Sigmoid colon (tissue), 7 donors: ENCODE measurements at regions of chr17 and their contacts with region 1.

Region 1: DNA sequence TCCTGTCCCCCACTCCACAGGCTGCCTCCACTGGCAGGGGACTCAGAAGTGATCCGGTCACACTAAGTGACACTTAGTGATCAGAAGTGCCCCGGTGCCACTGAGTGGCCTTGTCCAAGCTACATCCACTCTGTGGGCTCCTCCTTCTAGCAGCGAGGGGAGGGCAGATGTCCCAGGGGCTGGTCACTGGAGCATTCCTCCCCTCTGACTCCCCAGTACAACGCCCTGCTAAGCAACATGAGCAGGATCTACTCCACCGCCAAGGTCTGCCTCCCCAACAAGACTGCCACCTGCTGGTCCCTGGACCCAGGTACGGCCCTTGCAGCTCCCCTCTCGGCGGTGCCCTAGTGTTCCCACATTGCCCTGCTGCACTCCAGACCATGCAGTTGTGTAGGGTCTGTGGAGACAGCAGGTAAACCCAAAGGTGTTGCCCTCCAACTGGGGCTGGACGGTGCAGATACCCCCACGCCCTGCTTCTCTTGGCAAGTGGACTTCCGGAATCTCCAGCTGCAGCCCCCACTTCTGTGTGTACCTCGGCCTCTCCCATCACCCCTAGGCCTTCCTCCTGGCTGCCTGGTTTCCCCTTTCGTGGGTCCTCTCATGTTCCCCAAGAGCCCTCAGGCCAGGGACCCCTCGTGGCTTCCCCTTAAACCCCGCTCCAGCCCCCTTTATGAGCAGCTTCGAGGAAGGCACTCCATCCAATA is 2.1 kb downstream of the ACE start:
- DNase-seq: peak; percentile 86
- H3K4me3 ChIP-seq: no peak overlapping the region
- H3K27ac ChIP-seq: no peak overlapping the region
- H3K4me1 ChIP-seq: peaks cover 0 to 25% (median 21%) of the 10 kb centered on the region in 4 donors
- H3K27me3 ChIP-seq: peaks cover 22 to 61% (median 36%) of the 10 kb centered on the region in 3 donors
- CTCF ChIP-seq: peak; percentile 12 to 49 (median 36)
- EP300 ChIP-seq: no peak
- POLR2A ChIP-seq: no peak

Region 2: DNA sequence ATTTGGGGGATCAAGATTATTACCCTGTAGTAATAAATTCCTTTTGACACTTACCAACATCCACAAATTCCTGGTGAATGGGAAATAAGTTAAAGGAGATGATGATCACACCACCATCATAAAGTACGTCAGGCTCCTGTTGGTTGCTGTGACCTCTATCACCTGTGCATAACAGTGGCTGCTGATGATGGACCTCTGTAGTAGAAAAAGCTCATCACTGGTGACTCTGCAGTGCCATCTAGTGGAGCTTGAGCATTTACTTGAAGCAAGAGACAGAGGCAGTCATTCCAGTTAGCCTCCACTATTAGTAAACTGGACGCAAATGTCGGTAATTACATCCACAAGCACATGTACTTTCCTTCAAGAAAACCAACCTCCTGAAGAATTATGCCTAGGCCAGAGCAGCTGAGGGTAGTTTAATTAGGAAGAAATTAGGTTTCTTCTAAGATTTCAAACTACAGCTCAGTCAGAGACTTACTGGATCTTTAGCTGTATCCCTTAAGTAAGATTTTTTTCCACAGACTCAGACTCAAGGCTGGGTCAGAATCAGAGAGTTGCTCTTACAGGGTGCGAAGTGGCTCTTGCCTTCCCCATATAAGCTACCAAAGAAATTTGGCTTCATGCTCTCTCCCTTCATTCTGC is 72.1 kb before region 1 on chr17:
- intact Hi-C with region 1: no loop called
- DNase-seq: peak; percentile 85
- H3K4me3 ChIP-seq: no peak overlapping the region
- H3K27ac ChIP-seq: no peak overlapping the region
- H3K4me1 ChIP-seq: peaks cover 0 to 9% (median 8%) of the 10 kb centered on the region in 4 donors
- H3K27me3 ChIP-seq: no peaks in the 10 kb centered on the region
- CTCF ChIP-seq: peak; percentile 71 to 87 (median 76)
- EP300 ChIP-seq: no peak
- POLR2A ChIP-seq: no peak

Region 3: GRCh38 chr17:63425482-63425881 is 53.5 kb before region 1 on chr17:
- intact Hi-C with region 1: loop called (anchors 5 kb)
- DNase-seq: peak; percentile 88
- H3K4me3 ChIP-seq: no peak overlapping the region
- H3K27ac ChIP-seq: no peak overlapping the region
- H3K4me1 ChIP-seq: no peaks in the 10 kb centered on the region
- H3K27me3 ChIP-seq: no peaks in the 10 kb centered on the region
- CTCF ChIP-seq: peak; percentile 75 to 92 (median 91)
- EP300 ChIP-seq: no peak
- POLR2A ChIP-seq: no peak

Region 4: DNA sequence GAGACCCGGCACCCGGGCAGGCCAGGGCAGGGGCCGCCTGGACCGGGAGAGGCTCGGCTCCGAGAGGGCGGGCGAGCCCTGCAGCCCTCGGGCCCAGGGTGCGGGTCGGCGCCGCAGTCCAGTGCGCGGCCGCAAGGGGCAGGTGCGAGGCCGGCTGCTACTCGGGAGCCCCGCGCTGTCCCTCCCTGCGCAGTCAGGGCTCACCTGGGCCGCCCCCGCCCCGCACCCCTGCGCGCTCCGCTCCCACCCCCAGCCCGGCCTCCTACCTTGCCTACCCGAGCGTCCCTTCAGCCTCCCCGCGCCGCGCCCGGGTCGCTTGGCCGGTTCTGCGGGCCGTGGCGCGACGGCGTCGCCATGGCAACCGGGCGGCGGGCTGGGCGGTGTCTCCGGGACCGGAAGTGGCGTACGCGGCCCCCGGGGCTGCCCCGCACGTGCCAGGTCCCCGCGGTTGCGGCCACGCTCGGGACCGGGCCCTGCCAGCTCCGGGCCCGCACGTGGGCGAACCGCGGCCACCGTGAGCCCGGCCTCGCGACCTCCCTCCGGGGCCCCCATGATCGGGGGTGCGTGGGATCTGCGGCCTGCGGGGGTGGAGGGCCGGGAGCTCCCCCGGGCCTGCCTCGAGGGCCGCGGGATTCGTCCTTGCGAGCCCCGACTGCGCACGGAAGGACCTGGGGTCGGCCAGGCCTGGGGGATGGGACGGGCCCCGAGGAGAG is 32.8 kb before region 1 on chr17 and contains the start of gene CYB561:
- intact Hi-C with region 1: no loop called
- DNase-seq: peak; percentile 89
- H3K4me3 ChIP-seq: peak within 1 kb of the TSS; percentile 41 to 71 (median 63)
- H3K27ac ChIP-seq: peak within 1 kb of the TSS; percentile 67 to 80 (median 74)
- H3K4me1 ChIP-seq: peaks cover 0 to 28% (median 18%) of the 10 kb centered on the region in 4 donors
- H3K27me3 ChIP-seq: no peaks in the 10 kb centered on the region
- CTCF ChIP-seq: peak in 3 of 4 experiments; percentile 17 to 52 (median 41)
- EP300 ChIP-seq: no peak
- POLR2A ChIP-seq: no peak
- total RNA-seq, gene CYB561: 6.3 to 16.4 (median 12.9) TPM